Colonic mucosa (tissue), 4 donors: ENCODE measurements at regions of chr17 and their contacts with region 1.

Region 1: DNA sequence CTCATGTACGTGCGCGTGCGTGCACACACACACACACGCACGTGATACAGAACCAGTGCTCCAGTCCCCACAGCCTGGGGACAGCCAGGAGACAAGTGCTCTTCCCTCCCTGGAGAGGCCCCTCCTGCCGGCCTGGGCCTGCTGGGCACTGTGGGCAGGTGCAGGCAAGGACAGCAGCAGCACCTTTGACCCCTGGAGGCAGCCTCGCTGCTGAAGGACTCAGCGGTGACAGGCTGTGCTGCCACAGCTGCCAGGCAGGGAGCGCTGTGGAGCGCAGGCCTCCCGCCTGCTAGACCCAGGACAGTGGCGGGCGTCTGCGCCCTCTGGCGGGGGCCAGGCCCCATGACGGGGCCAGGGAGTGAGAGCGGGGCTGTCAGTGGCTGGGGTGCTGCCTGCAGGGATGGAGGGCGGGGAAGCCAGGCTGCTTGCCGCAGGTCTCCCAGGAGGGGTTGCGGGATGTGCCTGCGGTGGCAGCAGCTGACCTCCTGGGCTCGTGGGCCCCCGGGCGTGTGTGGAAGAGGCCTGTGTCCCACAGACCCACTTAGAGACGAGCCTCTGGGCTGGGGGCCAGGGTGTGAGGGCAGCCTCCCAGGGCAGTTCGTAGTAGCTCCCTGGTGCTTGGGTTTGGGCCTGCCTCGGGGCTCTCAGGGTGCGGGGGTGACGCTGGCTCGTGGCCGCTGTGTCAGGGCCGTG is 63.5 kb upstream of the PVALEF start:
- DNase-seq: peak; percentile 84
- H3K4me3 ChIP-seq: no peak overlapping the region
- H3K27ac ChIP-seq: no peak overlapping the region
- H3K4me1 ChIP-seq: peaks cover 11% of the 10 kb centered on the region
- H3K27me3 ChIP-seq: no peaks in the 10 kb centered on the region
- CTCF ChIP-seq: peak; percentile 100

Region 2: DNA sequence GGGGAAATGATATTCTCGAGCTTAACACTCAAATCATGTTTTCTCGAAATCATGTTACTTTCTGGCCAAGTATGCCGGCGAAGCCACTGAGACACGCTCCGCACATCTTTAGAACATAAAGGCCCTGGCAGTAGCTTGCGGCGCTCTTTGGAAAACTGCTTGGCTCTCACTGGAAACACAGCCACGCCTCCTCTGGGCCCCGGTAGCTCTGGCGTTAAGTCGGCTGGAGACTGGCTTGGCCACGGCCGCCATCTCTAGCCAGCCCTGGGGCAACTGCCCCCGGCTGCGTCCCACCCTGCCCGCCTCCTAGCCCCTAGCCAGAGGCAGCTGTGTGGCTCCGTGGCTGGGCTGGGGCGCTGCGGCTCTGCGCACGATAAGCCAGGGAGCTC is 76.0 kb before region 1 on chr17:
- intact Hi-C with region 1: loop called (anchors 2 kb)
- DNase-seq: no peak
- H3K4me3 ChIP-seq: no peak overlapping the region
- H3K27ac ChIP-seq: no peak overlapping the region
- H3K4me1 ChIP-seq: peaks cover 18% of the 10 kb centered on the region
- H3K27me3 ChIP-seq: peaks cover 18% of the 10 kb centered on the region
- CTCF ChIP-seq: no peak